Head of caudate nucleus (tissue), 42 donors: ENCODE measurements at regions of chr6 and their contacts with region 1.

Region 1: DNA sequence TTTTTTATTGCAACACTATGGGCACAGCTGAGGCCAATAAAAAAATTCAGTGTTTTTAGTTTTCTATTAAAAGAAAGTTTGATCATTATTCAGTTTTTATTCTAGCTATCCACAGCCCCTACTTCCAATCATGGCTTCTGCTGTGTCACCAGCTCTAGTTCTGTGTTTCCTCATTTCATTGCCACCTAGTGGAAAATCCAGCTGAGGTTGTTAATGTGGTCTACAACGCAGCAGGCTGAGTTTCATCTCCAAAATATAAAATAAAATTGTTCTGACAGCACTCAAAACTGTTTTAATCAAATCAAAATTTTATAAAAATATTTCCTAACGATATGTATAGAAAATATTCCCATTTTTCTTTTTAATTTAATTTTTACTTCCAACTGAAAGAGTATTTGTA is 13.6 kb downstream of the COL9A1 start:
- DNase-seq: peak in 8 of 42 donors; percentile 8 to 54 (median 19)

Region 2: GRCh38 chr6:70142034-70142433 is 147.3 kb before region 1 on chr6:
- intact Hi-C with region 1: no loop called
- DNase-seq: no peak

Region 3: GRCh38 chr6:70221025-70221714 is 68.1 kb before region 1 on chr6:
- intact Hi-C with region 1: loop called (anchors 5 kb)
- DNase-seq: peak in 12 of 42 donors; percentile 17 to 58 (median 26)

Region 4: GRCh38 chr6:70241991-70242420 is 47.3 kb before region 1 on chr6:
- intact Hi-C with region 1: no loop called
- DNase-seq: peak in 1 of 42 donors; percentile 14

Region 5: DNA sequence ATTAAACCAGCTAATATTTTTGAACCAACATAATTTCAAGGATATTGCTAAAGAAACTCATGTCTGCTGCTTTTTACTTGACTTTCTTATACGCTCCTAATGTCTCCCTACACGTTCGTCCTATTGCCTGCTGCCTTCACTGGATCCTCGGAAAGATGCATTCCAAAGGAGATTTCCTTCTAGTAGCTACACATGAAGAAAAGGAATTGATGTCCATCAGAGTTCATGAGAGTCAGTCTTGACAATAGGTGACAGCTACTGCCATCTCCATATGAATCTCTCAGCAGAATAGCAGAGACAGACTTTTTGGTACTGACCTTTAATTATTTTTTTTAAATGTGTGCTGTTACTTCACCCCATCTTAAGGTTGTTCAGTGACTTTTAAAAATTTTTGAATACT is 37.7 kb after region 1 on chr6:
- intact Hi-C with region 1: no loop called
- DNase-seq: no peak

Region 6: DNA sequence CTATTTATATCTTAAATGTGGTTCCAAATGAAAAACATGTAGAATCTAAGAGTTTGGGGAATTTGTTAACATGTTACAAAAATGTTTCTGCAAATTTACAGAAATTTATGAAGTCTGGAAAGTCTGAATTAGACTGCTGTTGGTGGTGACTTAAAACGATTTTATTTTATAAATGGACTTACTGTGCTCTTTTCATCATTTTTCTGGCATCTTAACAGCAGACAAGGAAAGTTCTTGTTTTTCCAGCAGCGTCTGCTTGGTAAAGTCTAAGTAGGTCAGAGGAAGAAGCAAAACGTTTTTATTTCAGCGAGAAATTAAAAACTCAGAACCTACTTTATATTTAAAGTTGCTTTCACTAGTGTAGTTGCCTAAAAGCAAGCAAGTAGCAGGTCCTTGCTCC is 62.2 kb after region 1 on chr6:
- intact Hi-C with region 1: no loop called
- DNase-seq: no peak